BJ (cell line): ENCODE measurements at regions of chr3 and their contacts with region 1.

Region 1: DNA sequence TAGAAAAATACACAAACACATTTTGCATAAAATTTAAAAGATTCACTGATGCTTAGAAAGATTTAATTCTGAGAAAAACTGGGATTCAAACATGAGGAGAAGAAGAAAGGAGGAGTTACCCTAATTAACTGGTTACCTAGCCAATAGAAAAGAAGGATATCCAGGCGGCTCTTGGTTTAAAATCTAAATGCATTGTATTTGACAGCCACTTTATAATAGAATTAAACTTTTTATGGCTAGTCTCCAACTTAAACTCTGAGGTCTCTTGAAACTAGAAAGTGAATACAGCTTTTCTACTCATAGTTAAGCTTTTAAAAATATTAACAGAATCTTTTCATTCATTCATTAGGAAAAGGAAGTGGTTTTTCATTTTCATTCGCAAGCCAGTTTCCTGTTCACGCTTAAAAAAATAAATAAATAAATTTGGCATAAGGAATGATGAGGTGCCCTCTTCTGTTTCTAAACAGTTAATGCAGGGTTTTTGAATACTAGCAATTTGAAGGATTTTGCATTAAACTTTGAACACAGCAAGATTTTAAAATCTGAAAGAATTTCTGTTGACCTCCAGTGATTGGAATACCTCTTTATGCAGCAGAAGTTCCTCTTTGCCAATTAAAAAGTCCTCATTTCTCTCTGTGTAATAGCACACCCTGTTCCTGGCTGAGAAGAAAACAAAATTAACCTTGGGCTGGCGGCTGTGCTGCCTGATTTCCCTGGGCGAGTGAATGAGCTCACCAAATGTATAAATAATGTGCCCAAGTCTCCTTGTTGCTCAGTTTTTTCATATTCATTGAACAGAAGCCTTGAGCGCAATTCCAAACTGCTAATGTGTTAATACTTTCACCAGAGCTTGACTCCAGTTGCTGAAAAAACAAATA is 105.1 kb downstream of the ZMAT3 start:
- DNase-seq: no peak
- H3K4me3 ChIP-seq: no peak overlapping the region
- H3K27me3 ChIP-seq: no peaks in the 10 kb centered on the region
- CTCF ChIP-seq: peak; percentile 58

Region 2: DNA sequence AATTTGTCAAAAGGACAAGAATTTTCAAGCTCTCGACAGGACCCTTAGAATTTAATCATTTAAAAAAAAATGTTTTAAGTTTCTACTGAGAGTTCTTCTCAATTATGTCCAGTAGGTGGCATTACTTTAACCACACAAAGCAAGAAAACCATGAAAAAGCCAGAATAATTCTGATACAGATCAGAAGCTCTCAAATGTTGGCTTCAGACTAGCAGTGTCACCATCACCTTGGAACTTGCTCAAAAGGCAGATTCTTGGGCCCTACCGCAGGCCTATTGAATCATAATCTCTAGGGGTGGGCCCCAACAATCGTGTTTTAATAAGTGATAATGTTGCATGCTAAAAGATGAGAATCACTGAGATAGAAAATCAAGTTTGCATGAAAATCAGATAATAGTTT is 529.8 kb before region 1 on chr3:
- CTCF ChIA-PET with region 1: interaction called, 14 read pairs
- POLR2A ChIA-PET with region 1: no interaction called
- DNase-seq: peak; percentile 49
- H3K4me3 ChIP-seq: no peak overlapping the region
- H3K27me3 ChIP-seq: no peaks in the 10 kb centered on the region
- CTCF ChIP-seq: peak; percentile 55

Region 3: GRCh38 chr3:178982137-178982536 is 15.6 kb after region 1 on chr3:
- CTCF ChIA-PET with region 1: no interaction called
- POLR2A ChIA-PET with region 1: no interaction called
- DNase-seq: no peak
- H3K4me3 ChIP-seq: no peak overlapping the region
- H3K27me3 ChIP-seq: no peaks in the 10 kb centered on the region
- CTCF ChIP-seq: no peak